GM12878 (cell line): ENCODE measurements at regions of chr1 and their contacts with region 1.

Region 1: GRCh38 chr1:53860967-53861411 is 22.9 kb upstream of the NDC1 start:
- DNase-seq: no peak
- ATAC-seq: peak; percentile 95
- H3K4me3 ChIP-seq: no peak overlapping the region
- H3K27ac ChIP-seq: no peak overlapping the region
- H3K4me1 ChIP-seq: no peaks in the 10 kb centered on the region; the same call in 1 of the 2 replicates
- H3K27me3 ChIP-seq: no peaks in the 10 kb centered on the region
- CTCF ChIP-seq: peak; percentile 83 to 88 (median 86)
- EP300 ChIP-seq: no peak
- POLR2A ChIP-seq: no peak
- RAD21 ChIP-seq: peak; percentile 91

Region 2: DNA sequence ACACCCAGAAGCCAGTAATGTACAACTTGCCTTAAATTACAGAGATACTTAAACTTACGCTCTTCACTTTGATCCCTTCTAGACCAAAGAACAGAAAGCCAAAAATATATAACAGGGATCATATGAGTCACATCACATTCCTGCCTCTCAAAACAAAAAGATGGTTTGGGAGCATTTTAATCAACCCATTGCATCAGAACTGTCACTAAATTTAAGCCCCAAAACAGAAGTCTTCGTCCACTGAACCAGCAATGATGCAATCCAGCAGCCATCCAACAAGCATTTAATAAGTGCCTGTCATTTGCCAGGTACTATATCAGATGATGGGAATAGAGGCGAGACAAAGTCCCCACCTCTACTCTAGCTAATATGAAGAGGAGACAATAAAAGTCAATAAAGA is 79.3 kb before region 1 on chr1:
- CTCF ChIA-PET with region 1: no interaction called
- POLR2A ChIA-PET with region 1: no interaction called
- RAD21 ChIA-PET with region 1: no interaction called
- SMC1A ChIA-PET with region 1: no interaction called
- in situ Hi-C with region 1: no loop called
- intact Hi-C with region 1: no loop called
- DNase-seq: no peak
- ATAC-seq: no peak
- H3K4me3 ChIP-seq: no peak overlapping the region
- H3K27ac ChIP-seq: no peak overlapping the region
- H3K4me1 ChIP-seq: no peaks in the 10 kb centered on the region
- H3K27me3 ChIP-seq: no peaks in the 10 kb centered on the region
- CTCF ChIP-seq: no peak
- EP300 ChIP-seq: no peak
- POLR2A ChIP-seq: no peak
- RAD21 ChIP-seq: no peak

Region 3: GRCh38 chr1:53847980-53848379 is 13.0 kb before region 1 on chr1:
- CTCF ChIA-PET with region 1: interaction called, 29 read pairs
- POLR2A ChIA-PET with region 1: no interaction called
- RAD21 ChIA-PET with region 1: interaction called, 12 read pairs
- SMC1A ChIA-PET with region 1: interaction called, 14 read pairs
- in situ Hi-C with region 1: no loop called
- intact Hi-C with region 1: no loop called
- DNase-seq: no peak
- ATAC-seq: no peak
- H3K4me3 ChIP-seq: no peak overlapping the region
- H3K27ac ChIP-seq: no peak overlapping the region
- H3K4me1 ChIP-seq: no peaks in the 10 kb centered on the region
- H3K27me3 ChIP-seq: no peaks in the 10 kb centered on the region
- CTCF ChIP-seq: no peak
- EP300 ChIP-seq: no peak
- POLR2A ChIP-seq: no peak
- RAD21 ChIP-seq: no peak

Region 4: DNA sequence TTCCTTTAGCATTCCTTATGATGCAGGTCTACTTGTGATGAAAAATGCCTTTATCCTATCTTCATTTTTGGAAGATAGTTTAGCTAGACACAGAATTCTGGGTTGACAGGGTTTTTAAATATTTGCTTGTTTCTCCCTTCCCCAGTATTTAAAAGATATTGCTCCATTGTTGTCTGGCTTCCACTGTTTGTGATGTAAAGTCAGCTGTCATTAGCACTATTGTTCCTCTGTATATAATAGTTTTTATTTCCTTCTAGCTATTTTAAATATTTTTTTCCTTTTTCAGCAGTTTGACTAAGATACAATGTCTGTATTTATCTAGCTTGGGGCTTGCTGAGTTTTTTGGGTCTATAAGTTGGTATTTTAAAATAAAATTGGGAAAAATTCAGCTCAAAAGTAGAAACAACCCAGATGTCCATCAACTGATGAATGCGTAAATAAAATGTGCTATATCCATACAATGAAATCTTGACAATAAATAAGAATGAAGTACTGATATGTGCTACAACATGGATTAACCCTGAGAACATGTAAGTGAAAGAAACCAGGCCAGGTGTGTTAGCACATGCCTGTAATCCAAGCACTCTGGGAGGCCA is 73.3 kb after region 1 on chr1:
- CTCF ChIA-PET with region 1: interaction called, 10 read pairs
- POLR2A ChIA-PET with region 1: interaction called, 4 read pairs
- RAD21 ChIA-PET with region 1: no interaction called
- SMC1A ChIA-PET with region 1: interaction called, 4 read pairs
- in situ Hi-C with region 1: no loop called
- intact Hi-C with region 1: no loop called
- DNase-seq: no peak
- ATAC-seq: no peak
- H3K4me3 ChIP-seq: no peak overlapping the region
- H3K27ac ChIP-seq: no peak overlapping the region
- H3K4me1 ChIP-seq: no peaks in the 10 kb centered on the region
- H3K27me3 ChIP-seq: no peaks in the 10 kb centered on the region
- CTCF ChIP-seq: no peak
- EP300 ChIP-seq: no peak
- POLR2A ChIP-seq: no peak
- RAD21 ChIP-seq: no peak

Region 5: DNA sequence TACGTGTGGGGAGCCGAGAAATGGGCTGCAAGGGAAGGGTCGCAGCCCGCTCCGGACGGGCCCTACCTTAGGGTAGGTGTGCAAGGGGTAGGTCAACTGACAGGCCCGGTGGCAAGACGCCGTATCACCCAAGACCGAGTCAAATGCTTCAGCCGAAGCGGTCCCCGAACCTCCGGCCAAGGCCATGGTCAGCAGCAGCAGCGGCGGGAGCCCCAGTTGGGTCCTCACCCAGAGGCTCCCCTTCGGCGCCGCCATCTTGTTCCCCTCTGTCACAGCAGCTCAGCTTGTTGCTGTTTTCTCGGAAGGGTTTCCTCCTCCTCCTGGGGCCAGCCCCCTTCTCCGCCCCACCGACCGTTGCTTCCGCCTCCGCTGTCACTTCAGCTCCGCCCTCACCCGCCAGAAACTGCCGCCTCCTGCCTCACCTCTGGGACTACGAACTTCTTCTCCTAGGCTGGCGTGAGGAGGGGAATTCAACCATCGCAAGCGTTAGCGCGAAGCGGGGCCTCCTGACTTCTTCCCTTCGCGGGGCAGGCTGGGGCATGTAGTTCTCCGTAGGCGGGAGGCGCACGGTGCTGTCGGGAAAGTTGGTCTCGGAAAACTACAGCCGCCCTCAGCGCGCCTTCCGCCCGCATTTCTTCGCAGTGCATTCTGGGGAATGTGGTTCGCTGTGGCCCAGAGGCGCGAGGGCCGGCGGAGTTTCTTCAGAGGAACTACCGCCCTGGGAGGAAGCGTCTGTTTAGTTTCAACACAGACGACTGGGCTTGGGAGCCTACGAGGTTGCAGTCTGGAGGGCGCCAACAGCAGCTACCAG is 192.2 kb after region 1 on chr1 and contains the starts of genes TCEANC2 and TMEM59:
- CTCF ChIA-PET with region 1: interaction called, 5 read pairs
- POLR2A ChIA-PET with region 1: no interaction called
- RAD21 ChIA-PET with region 1: interaction called, 3 read pairs
- SMC1A ChIA-PET with region 1: interaction called, 6 read pairs
- in situ Hi-C with region 1: loop called (anchors 25 kb)
- intact Hi-C with region 1: loop called (anchors 10 kb)
- DNase-seq: peak; percentile 99
- ATAC-seq: peak; percentile 95
- H3K4me3 ChIP-seq: peak within 1 kb of the TSS; percentile 92
- H3K27ac ChIP-seq: peak within 1 kb of the TSS; percentile 88
- H3K4me1 ChIP-seq: peaks cover 6% of the 10 kb centered on the region
- H3K27me3 ChIP-seq: no peaks in the 10 kb centered on the region
- CTCF ChIP-seq: no peak
- EP300 ChIP-seq: no peak
- POLR2A ChIP-seq: peak; percentile 75
- RAD21 ChIP-seq: no peak
- polyA plus RNA-seq, gene TCEANC2: 5.4 to 10.5 TPM
- polyA plus RNA-seq, gene TMEM59: 112 to 128 TPM